ENCODE measurements at regions of chr5 and their contacts with region 1.

Region 1: DNA sequence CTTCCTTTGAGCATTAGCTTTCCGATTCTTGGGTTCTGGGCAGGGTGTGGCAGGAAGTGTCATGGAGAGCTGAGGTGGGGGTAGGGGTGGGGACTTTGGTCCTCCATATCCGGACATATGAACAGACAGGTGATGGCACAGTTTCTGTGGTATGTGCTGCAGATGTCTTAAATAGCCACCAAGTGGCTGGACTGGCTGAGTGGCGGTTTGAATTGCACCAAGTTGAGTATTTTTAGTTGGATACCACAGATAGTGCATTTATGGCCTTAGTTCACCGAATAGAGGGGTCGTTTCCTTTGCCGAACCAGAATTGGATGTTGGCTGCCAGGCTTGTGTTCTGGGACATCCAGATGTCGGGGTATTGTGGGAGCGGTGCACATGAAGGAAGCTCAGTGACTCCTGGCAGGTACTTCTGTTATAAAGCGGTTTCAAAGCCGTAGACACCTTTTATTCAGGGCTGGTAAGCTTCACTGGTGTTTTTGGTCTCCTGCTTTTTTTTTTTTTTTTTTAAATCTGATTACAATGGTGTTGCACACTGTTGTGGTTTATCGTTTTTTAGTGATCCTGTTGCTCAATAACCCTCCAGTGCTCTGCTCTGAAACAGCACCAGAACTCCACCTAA is 15.1 kb upstream of the TNFAIP8 start:
- DNase-seq: peak; percentile 91
- ATAC-seq: peak; percentile 73
- H3K4me3 ChIP-seq: peak overlapping the region; percentile 78
- H3K27ac ChIP-seq: peak overlapping the region; percentile 100
- H3K4me1 ChIP-seq: peaks cover 69% of the 10 kb centered on the region
- H3K27me3 ChIP-seq: no peaks in the 10 kb centered on the region
- CTCF ChIP-seq: 0 out of 6 replicates have a peak, but pooled peaks of 1 of the 3 experiments have one; percentile 20
- EP300 ChIP-seq: peak; percentile 55 to 86; a peak in 3 of 4 replicates
- POLR2A ChIP-seq: peak; percentile 50; the same call in 1 of the 2 replicates
- RAD21 ChIP-seq: peak; percentile 30; the same call in 1 of the 2 replicates

Region 2: DNA sequence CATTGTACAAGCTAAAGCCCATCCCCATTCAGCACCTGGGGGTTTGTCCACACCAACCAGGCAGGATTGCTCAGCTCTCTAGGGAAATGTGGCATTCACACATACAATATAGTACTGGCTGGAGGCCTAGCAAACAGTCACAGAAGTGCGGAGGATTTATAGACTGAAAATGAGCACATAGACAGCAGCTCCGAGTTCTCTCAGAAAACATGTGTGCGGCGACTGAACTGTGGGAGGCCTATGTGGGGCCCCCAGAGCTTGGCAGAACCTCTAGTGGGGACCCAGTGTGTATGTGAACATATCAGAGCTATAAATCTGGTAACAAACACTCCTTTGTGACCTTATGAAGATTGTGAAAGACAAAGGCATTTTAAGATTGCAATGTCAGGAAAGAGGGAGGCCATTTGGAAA is 783.5 kb before region 1 on chr5:
- CTCF ChIA-PET with region 1: no interaction called
- POLR2A ChIA-PET with region 1: no interaction called
- RAD21 ChIA-PET with region 1: no interaction called
- SMC1A ChIA-PET with region 1: no interaction called
- in situ Hi-C with region 1: no loop called
- intact Hi-C with region 1: no loop called
- DNase-seq: no peak
- ATAC-seq: no peak
- H3K4me3 ChIP-seq: no peak overlapping the region
- H3K27ac ChIP-seq: no peak overlapping the region
- H3K4me1 ChIP-seq: no peaks in the 10 kb centered on the region; the same call in 1 of the 2 replicates
- H3K27me3 ChIP-seq: no peaks in the 10 kb centered on the region
- CTCF ChIP-seq: no peak
- EP300 ChIP-seq: no peak
- POLR2A ChIP-seq: no peak
- RAD21 ChIP-seq: no peak

Region 3: DNA sequence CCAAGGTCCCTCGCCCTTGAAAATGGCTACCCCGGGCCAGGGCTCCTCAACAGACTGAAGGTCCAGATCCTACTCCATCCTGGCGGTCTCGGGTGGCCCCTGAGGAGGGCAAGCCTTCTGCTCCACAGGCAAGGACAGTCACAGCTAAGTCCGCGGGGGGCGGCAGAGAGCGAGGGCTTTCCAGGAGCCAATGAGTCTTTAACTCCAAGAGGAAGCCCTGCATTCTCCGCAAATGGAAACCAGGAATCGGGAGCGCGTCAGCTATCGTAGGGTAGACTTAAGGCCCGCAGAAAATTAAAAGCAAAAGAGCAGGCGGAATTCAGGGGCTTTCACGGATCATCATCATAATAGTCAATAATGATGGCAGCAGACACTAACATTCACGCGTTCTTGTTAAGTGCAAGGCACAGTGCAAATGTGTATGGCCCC is 72.7 kb before region 1 on chr5:
- CTCF ChIA-PET with region 1: interaction called, 6 read pairs
- POLR2A ChIA-PET with region 1: interaction called, 59 read pairs
- RAD21 ChIA-PET with region 1: interaction called, 27 read pairs
- SMC1A ChIA-PET with region 1: interaction called, 175 read pairs
- in situ Hi-C with region 1: no loop called
- intact Hi-C with region 1: loop called (anchors 2 kb)
- DNase-seq: peak; percentile 81
- ATAC-seq: peak; percentile 81
- H3K4me3 ChIP-seq: peak overlapping the region; percentile 99
- H3K27ac ChIP-seq: peak overlapping the region; percentile 90
- H3K4me1 ChIP-seq: peaks cover 13% of the 10 kb centered on the region
- H3K27me3 ChIP-seq: no peaks in the 10 kb centered on the region
- CTCF ChIP-seq: peak; percentile 63 to 80 (median 68)
- EP300 ChIP-seq: no peak
- POLR2A ChIP-seq: no peak
- RAD21 ChIP-seq: peak; percentile 46; the same call in 1 of the 2 replicates

Region 4: GRCh38 chr5:119290161-119290569 is 50.5 kb before region 1 on chr5:
- CTCF ChIA-PET with region 1: interaction called, 3 read pairs
- POLR2A ChIA-PET with region 1: interaction called, 11 read pairs
- RAD21 ChIA-PET with region 1: interaction called, 31 read pairs
- SMC1A ChIA-PET with region 1: interaction called, 18 read pairs
- in situ Hi-C with region 1: no loop called
- intact Hi-C with region 1: no loop called
- DNase-seq: peak; percentile 66
- ATAC-seq: peak; percentile 90
- H3K4me3 ChIP-seq: peak overlapping the region; percentile 38
- H3K27ac ChIP-seq: peak overlapping the region; percentile 84
- H3K4me1 ChIP-seq: peaks cover 46% of the 10 kb centered on the region
- H3K27me3 ChIP-seq: no peaks in the 10 kb centered on the region
- CTCF ChIP-seq: no peak
- EP300 ChIP-seq: peak; percentile 69 to 79; a peak in 2 of 4 replicates
- POLR2A ChIP-seq: no peak
- RAD21 ChIP-seq: no peak

Region 5: DNA sequence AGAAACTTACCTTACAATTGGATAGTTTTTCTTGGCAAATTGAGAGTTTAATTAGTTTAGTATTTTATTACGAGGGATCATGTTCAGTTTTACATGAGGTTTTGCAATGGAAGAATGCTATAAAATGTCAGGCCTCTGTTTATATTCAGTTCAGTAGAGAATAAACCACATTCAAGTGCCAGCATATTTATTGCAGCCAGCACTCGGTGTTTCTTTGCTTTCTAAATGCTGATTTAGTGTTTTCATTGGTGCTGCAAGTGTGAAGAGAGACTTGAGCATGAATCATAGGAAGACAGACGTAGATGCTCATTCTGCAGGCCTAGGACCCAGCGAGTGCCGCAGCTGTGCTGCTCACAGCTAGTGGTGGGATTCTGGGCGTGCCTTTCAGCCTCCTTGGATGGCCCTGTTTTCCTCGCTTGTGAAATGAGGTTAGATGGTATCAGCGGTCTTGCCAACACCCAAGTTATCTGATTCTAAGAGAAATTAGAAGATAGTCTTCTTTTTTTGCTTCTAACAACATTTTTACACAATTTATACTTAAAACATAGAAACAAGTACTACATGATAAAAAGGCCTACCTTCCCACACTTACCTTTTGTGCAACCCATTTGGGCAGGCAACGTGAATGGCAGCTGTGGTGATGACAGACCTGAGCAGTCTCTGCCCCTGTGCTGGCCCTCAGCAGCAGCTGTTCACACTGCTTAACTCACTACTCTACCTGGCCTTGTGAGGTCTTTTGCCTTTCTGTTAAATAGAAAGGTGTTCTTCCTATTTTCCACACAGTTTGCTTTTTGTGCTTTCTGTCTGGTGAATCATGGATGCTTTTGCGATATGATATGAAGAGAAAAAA is 11.7 kb before region 1 on chr5:
- CTCF ChIA-PET with region 1: interaction called, 9 read pairs
- POLR2A ChIA-PET with region 1: interaction called, 15 read pairs
- RAD21 ChIA-PET with region 1: interaction called, 46 read pairs
- SMC1A ChIA-PET with region 1: interaction called, 47 read pairs
- in situ Hi-C with region 1: no loop called
- intact Hi-C with region 1: no loop called
- DNase-seq: no peak
- ATAC-seq: no peak
- H3K4me3 ChIP-seq: no peak overlapping the region
- H3K27ac ChIP-seq: peak overlapping the region; percentile 7; the same call in 1 of the 2 replicates
- H3K4me1 ChIP-seq: peaks cover 48% of the 10 kb centered on the region
- H3K27me3 ChIP-seq: no peaks in the 10 kb centered on the region
- CTCF ChIP-seq: no peak
- EP300 ChIP-seq: no peak
- POLR2A ChIP-seq: no peak
- RAD21 ChIP-seq: no peak

Region 6: GRCh38 chr5:119367502-119368237 is 27.0 kb after region 1 on chr5:
- CTCF ChIA-PET with region 1: interaction called, 187 read pairs
- POLR2A ChIA-PET with region 1: interaction called, 657 read pairs
- RAD21 ChIA-PET with region 1: interaction called, 501 read pairs
- SMC1A ChIA-PET with region 1: interaction called, 1,117 read pairs
- in situ Hi-C with region 1: no loop called
- intact Hi-C with region 1: loop called (anchors 1 kb)
- DNase-seq: peak; percentile 81
- ATAC-seq: peak; percentile 72
- H3K4me3 ChIP-seq: peak overlapping the region; percentile 59
- H3K27ac ChIP-seq: peak overlapping the region; percentile 95
- H3K4me1 ChIP-seq: peaks cover 44% of the 10 kb centered on the region
- H3K27me3 ChIP-seq: no peaks in the 10 kb centered on the region
- CTCF ChIP-seq: no peak
- EP300 ChIP-seq: peak; percentile 92 to 95
- POLR2A ChIP-seq: no peak
- RAD21 ChIP-seq: 0 out of 2 replicates have a peak, but pooled peaks have one; percentile 8

Region 7: DNA sequence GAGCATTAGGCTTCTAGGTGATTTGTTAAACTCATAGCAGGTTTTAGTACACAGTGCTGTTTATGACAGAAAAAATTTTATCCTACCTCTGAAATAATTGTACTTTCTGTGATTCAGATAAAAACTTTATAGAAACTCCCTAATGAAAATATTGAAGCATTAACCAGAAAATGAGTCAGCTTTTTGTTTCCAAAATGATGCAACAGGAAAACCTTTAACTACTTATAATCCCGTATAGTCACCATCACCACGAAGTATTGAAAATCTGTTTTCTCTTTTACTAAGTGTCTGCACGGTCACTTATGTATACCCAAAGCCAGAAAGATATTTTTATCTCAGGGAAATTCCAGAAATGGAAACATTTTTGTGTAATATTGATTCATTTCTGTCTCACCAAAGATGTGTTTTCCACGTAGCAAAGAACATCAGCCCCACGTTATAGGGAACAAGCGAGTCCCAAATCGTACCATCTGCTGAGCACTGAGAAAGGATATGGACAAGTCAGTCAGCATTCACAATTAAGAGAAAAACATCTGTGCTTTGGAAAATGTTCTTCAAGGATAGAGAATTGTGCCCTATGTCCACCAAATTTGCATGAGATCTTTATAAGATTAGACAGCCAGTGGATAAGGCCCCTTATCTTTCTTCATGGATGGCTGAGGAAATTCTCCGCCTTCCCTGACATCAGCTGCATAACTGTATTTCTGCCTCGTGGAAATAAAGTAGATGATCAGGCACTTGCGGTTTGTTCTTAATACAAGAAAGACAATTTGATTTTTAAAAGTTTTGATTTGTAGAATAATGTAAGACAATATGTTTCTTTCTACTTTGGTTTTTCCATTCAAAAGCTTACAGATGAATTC is 57.0 kb after region 1 on chr5:
- CTCF ChIA-PET with region 1: interaction called, 8 read pairs
- POLR2A ChIA-PET with region 1: interaction called, 5 read pairs
- RAD21 ChIA-PET with region 1: interaction called, 22 read pairs
- SMC1A ChIA-PET with region 1: interaction called, 583 read pairs
- in situ Hi-C with region 1: no loop called
- intact Hi-C with region 1: loop called (anchors 1 kb)
- DNase-seq: peak; percentile 81
- ATAC-seq: peak; percentile 73
- H3K4me3 ChIP-seq: 0 out of 2 replicates have a peak overlapping the region, but pooled peaks have one; percentile 1
- H3K27ac ChIP-seq: peak overlapping the region; percentile 83
- H3K4me1 ChIP-seq: peaks cover 65% of the 10 kb centered on the region
- H3K27me3 ChIP-seq: no peaks in the 10 kb centered on the region
- CTCF ChIP-seq: no peak
- EP300 ChIP-seq: peak; percentile 93 to 94
- POLR2A ChIP-seq: no peak
- RAD21 ChIP-seq: no peak